ENCODE measurements at regions of chr12 and their contacts with region 1.

Region 1: DNA sequence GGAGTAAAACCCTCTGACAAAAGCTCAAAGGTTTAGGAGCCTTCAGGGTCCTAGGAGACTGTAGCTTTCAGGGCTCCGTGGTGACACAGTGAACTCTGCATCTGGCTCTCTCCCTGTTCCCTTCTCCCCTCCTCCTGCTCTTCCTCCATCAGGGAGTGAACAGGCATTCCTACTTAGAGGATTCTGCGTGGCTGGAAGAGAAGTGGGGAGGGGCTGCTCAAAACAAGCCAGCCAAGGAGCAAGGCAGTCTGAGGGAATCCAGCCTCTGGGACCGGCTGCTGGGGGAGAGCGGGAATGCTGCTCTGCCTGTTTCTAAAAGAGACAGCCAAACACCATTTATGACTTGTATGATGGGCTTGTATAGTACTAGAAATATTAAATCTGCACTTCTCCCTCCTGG is 49.5 kb downstream of the RBMS2 start:
- DNase-seq: no peak
- H3K4me3 ChIP-seq: no peak overlapping the region
- H3K27ac ChIP-seq: no peak overlapping the region
- H3K4me1 ChIP-seq: peaks cover 5% of the 10 kb centered on the region
- CTCF ChIP-seq: no peak

Region 2: GRCh38 chr12:56518570-56518969 is 52.6 kb before region 1 on chr12:
- CTCF ChIA-PET with region 1: no interaction called
- POLR2A ChIA-PET with region 1: no interaction called
- intact Hi-C with region 1: loop called (anchors 1 kb)
- DNase-seq: no peak
- H3K4me3 ChIP-seq: no peak overlapping the region
- H3K27ac ChIP-seq: no peak overlapping the region
- H3K4me1 ChIP-seq: no peaks in the 10 kb centered on the region
- CTCF ChIP-seq: no peak